ENCODE measurements at regions of chr14 and their contacts with region 1.

Region 1: GRCh38 chr14:49946320-49947141 is 53.6 kb downstream of the ARF6 start:
- DNase-seq: peak; percentile 45
- H3K4me3 Mint-ChIP-seq: peak overlapping the region; percentile 58
- H3K27ac Mint-ChIP-seq: peak overlapping the region; percentile 91
- H3K4me1 Mint-ChIP-seq: peaks cover 73% of the 10 kb centered on the region
- H3K27me3 Mint-ChIP-seq: no peaks in the 10 kb centered on the region

Region 2: GRCh38 chr14:49808780-49809179 is 137.8 kb before region 1 on chr14:
- CTCF ChIA-PET with region 1: no interaction called
- POLR2A ChIA-PET with region 1: no interaction called
- DNase-seq: no peak
- H3K4me3 Mint-ChIP-seq: no peak overlapping the region
- H3K27ac Mint-ChIP-seq: no peak overlapping the region
- H3K4me1 Mint-ChIP-seq: peaks cover 3% of the 10 kb centered on the region
- H3K27me3 Mint-ChIP-seq: no peaks in the 10 kb centered on the region

Region 3: GRCh38 chr14:49851813-49852212 is 94.7 kb before region 1 on chr14:
- CTCF ChIA-PET with region 1: no interaction called
- POLR2A ChIA-PET with region 1: no interaction called
- DNase-seq: no peak
- H3K4me3 Mint-ChIP-seq: peak overlapping the region; percentile 92
- H3K27ac Mint-ChIP-seq: peak overlapping the region; percentile 97
- H3K4me1 Mint-ChIP-seq: peaks cover 44% of the 10 kb centered on the region
- H3K27me3 Mint-ChIP-seq: no peaks in the 10 kb centered on the region

Region 4: GRCh38 chr14:49962621-49963020 is 16.1 kb after region 1 on chr14:
- CTCF ChIA-PET with region 1: interaction called, 22 read pairs
- POLR2A ChIA-PET with region 1: no interaction called
- DNase-seq: no peak
- H3K4me3 Mint-ChIP-seq: no peak overlapping the region
- H3K27ac Mint-ChIP-seq: no peak overlapping the region
- H3K4me1 Mint-ChIP-seq: peaks cover 52% of the 10 kb centered on the region
- H3K27me3 Mint-ChIP-seq: no peaks in the 10 kb centered on the region

Region 5: GRCh38 chr14:50031602-50032290 is 85.2 kb after region 1 on chr14:
- CTCF ChIA-PET with region 1: no interaction called
- POLR2A ChIA-PET with region 1: no interaction called
- DNase-seq: no peak
- H3K4me3 Mint-ChIP-seq: no peak overlapping the region
- H3K27ac Mint-ChIP-seq: no peak overlapping the region
- H3K4me1 Mint-ChIP-seq: peaks cover 27% of the 10 kb centered on the region
- H3K27me3 Mint-ChIP-seq: no peaks in the 10 kb centered on the region

Measured in activated CD4-positive, alpha-beta T cell treated with anti-CD3 and anti-CD28 coated beads, Interleukin-2, amount 10 ng/mL, durations not matched to agents 7 days and 5 days (primary cell).